AG04449 (cell line): ENCODE measurements at regions of chr2 and their contacts with region 1.

Region 1: DNA sequence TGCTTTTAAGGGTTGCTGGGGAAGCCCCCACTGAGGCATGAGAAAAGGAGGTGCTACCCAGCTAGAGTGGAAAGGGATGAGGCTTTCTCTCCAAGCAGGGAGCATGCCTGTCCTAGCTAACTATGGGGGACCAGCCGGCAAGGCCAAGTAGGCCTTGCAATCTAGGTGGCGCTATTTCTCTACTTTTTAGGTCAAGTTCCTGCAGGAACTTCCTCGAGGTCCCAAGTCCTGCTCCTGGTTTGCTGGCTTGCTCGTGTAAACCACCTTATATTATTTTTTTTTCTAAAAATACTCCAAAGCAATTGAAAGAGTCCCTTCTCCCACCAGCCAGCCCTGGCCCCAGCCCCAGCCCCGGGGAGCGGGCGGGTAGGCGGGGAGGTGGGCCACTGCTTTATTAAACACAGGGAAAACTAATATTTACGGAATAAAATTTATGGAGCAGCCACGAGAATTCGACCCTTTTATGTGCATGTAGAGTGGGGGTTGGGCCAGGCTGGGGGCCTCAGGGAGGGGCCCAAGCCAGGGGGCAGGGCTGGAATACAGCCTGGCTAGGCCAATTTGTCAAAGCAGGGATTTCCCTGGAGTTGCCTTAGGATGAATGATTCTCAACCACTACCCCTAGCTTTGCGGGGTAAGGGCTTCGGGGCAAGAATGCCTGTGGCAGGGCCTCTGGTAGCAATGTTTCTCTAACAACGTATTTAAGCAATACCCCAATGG is 12.8 kb upstream of the IHH start:
- DNase-seq: peak; percentile 16
- H3K4me3 ChIP-seq: no peak overlapping the region
- CTCF ChIP-seq: peak; percentile 52

Region 2: DNA sequence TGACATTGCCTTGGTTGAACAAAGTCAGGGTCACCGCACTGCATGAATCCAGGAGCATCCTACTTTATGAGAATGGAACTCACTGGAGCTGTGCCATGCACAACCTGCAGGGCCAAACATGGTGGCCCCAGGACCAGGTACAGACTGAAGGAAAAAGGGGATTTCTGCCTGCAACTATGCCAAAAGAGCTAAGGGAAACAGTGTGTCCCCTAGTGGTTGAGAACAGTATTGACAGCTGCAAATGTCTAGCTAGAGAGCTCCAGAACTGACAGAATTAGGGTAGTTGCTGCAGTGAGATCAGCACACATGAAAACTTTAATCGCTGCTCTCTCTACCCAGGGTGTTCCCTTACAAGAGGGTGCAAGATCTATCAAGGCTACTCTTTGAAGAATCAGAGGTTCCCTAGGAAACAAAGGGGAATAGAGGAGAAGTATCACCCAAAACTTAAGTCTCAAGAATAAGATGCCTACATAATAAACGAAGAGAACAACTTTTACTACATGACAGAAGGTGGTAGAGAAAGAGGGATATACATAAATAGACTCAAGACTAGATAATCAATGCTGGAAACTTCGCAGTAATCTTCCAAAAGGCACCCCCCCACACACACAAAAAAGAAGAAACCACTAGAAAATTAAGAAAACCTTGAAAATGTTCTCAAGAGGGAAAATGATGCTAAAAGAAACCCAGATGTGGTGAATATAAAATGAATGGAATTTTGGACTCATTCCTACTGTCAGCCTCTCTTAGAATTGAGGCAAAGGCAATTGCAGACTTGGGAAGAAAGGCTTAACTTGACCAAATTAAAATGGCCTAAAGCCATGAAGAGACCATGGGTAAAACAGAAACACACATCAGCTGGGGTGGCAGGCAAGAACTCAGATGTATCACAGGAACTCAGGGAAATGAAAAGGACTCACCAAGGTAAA is 30.8 kb after region 1 on chr2:
- CTCF ChIA-PET with region 1: interaction called, 709 read pairs
- POLR2A ChIA-PET with region 1: no interaction called
- DNase-seq: no peak
- H3K4me3 ChIP-seq: no peak overlapping the region
- CTCF ChIP-seq: peak; percentile 71